PC-9 (cell line): ENCODE measurements at regions of chr5 and their contacts with region 1.

Region 1: GRCh38 chr5:25006737-25007302 is 362.0 kb upstream of the CDH10 start:
- DNase-seq: peak; percentile 5 to 59
- H3K4me3 ChIP-seq: no peak overlapping the region
- H3K27ac ChIP-seq: no peak overlapping the region
- H3K4me1 ChIP-seq: no peaks in the 10 kb centered on the region
- H3K27me3 ChIP-seq: no peaks in the 10 kb centered on the region
- CTCF ChIP-seq: peak; percentile 57

Region 2: GRCh38 chr5:24444414-24444813 is 562.4 kb before region 1 on chr5:
- CTCF ChIA-PET with region 1: no interaction called
- POLR2A ChIA-PET with region 1: no interaction called
- intact Hi-C with region 1: loop called (anchors 5 kb)
- DNase-seq: no peak
- H3K4me3 ChIP-seq: no peak overlapping the region
- H3K27ac ChIP-seq: no peak overlapping the region
- H3K4me1 ChIP-seq: no peaks in the 10 kb centered on the region
- H3K27me3 ChIP-seq: no peaks in the 10 kb centered on the region
- CTCF ChIP-seq: no peak

Region 3: GRCh38 chr5:24749701-24750100 is 257.1 kb before region 1 on chr5:
- CTCF ChIA-PET with region 1: no interaction called
- POLR2A ChIA-PET with region 1: no interaction called
- intact Hi-C with region 1: loop called (anchors 5 kb)
- DNase-seq: no peak
- H3K4me3 ChIP-seq: no peak overlapping the region
- H3K27ac ChIP-seq: no peak overlapping the region
- H3K4me1 ChIP-seq: no peaks in the 10 kb centered on the region
- H3K27me3 ChIP-seq: no peaks in the 10 kb centered on the region
- CTCF ChIP-seq: no peak